ENCODE measurements at regions of chr2 and their contacts with region 1.

Region 1: GRCh38 chr2:83063511-83063910 is 1395.6 kb downstream of the SUCLG1 start:
- DNase-seq: no peak
- H3K4me3 ChIP-seq: no peak overlapping the region
- H3K27me3 ChIP-seq: no peaks in the 10 kb centered on the region
- CTCF ChIP-seq: no peak

Region 2: GRCh38 chr2:83143946-83144345 is 80.4 kb after region 1 on chr2:
- CTCF ChIA-PET with region 1: interaction called, 3 read pairs
- POLR2A ChIA-PET with region 1: interaction called, 13 read pairs
- DNase-seq: no peak
- H3K4me3 ChIP-seq: no peak overlapping the region
- H3K27me3 ChIP-seq: no peaks in the 10 kb centered on the region
- CTCF ChIP-seq: no peak